SK-N-SH (cell line): ENCODE measurements at regions of chr17 and their contacts with region 1.

Region 1: DNA sequence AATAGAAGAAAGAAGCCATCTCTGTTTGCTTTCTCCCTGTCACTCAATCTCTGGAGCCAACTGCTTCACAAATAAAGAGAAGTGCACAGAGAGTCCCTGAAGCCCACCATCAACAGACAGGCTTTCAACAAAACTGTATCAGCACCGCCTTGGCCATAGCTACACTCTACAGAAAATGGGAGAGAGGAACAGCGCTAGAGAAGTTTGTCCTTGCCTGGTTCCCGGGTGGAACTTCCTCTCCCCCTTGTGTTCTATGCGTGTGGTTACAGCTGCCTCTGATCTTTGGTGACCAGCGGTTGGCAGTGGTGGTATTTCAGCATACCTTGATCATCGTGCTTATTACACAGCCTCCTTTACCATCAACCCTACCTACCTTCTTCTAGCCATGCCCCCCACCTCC is 91.4 kb upstream of the CCL2 start:
- DNase-seq: peak; percentile 60
- H3K4me3 ChIP-seq: no peak overlapping the region
- H3K27ac ChIP-seq: no peak overlapping the region
- H3K4me1 ChIP-seq: no peaks in the 10 kb centered on the region; a peak in 1 of 4 replicates
- H3K27me3 ChIP-seq: no peaks in the 10 kb centered on the region; the same call in 1 of the 2 replicates
- CTCF ChIP-seq: peak; percentile 41
- EP300 ChIP-seq: no peak
- RAD21 ChIP-seq: peak; percentile 80

Region 2: DNA sequence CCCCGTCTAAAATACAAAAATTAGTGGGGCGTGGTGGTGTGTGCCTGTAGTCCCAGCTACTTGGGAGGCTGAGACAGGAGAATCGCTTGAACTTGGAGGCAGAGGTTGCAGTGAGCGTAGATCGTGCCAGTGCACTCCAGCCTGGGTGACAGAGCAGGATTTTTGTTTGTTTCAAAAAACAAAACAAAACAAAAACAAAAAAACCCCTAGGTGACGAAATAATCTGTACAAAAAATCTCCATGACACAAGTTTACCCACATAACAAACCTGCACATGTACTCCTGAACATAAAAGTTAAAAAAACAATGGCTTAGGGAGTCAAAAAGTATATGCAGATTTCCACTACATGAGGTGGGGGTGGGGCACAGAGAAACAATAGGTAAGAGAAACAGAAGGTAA is 730.1 kb before region 1 on chr17:
- CTCF ChIA-PET with region 1: no interaction called
- POLR2A ChIA-PET with region 1: no interaction called
- DNase-seq: no peak
- H3K4me3 ChIP-seq: no peak overlapping the region
- H3K27ac ChIP-seq: no peak overlapping the region
- H3K4me1 ChIP-seq: no peaks in the 10 kb centered on the region
- H3K27me3 ChIP-seq: no peaks in the 10 kb centered on the region
- CTCF ChIP-seq: no peak
- EP300 ChIP-seq: no peak
- RAD21 ChIP-seq: no peak

Region 3: GRCh38 chr17:33927732-33928133 is 235.9 kb before region 1 on chr17:
- CTCF ChIA-PET with region 1: interaction called, 18 read pairs
- POLR2A ChIA-PET with region 1: no interaction called
- DNase-seq: peak; percentile 39
- H3K4me3 ChIP-seq: no peak overlapping the region
- H3K27ac ChIP-seq: no peak overlapping the region
- H3K4me1 ChIP-seq: peaks cover 0 to 3% of the 10 kb centered on the region in 2 experiments; a peak in 1 of 4 replicates
- H3K27me3 ChIP-seq: no peaks in the 10 kb centered on the region
- CTCF ChIP-seq: peak; percentile 22
- EP300 ChIP-seq: no peak
- RAD21 ChIP-seq: peak; percentile 70

Region 4: GRCh38 chr17:34133350-34133749 is 30.3 kb before region 1 on chr17:
- CTCF ChIA-PET with region 1: no interaction called
- POLR2A ChIA-PET with region 1: no interaction called
- DNase-seq: no peak
- H3K4me3 ChIP-seq: no peak overlapping the region
- H3K27ac ChIP-seq: no peak overlapping the region
- H3K4me1 ChIP-seq: no peaks in the 10 kb centered on the region; a peak in 1 of 4 replicates
- H3K27me3 ChIP-seq: no peaks in the 10 kb centered on the region
- CTCF ChIP-seq: no peak
- EP300 ChIP-seq: no peak
- RAD21 ChIP-seq: no peak

Region 5: GRCh38 chr17:34285286-34285792 is 121.7 kb after region 1 on chr17 and contains the start of gene CCL11:
- CTCF ChIA-PET with region 1: no interaction called
- POLR2A ChIA-PET with region 1: no interaction called
- DNase-seq: no peak
- H3K4me3 ChIP-seq: no peak within 1 kb of the TSS
- H3K27ac ChIP-seq: no peak within 1 kb of the TSS
- H3K4me1 ChIP-seq: no peaks in the 10 kb centered on the region
- H3K27me3 ChIP-seq: no peaks in the 10 kb centered on the region; the same call in 1 of the 2 replicates
- CTCF ChIP-seq: no peak
- EP300 ChIP-seq: no peak
- RAD21 ChIP-seq: no peak
- polyA plus RNA-seq, gene CCL11: not detected in 2 replicates